HepG2 (cell line): ENCODE measurements at regions of chr18 and their contacts with region 1.

Region 1: GRCh38 chr18:3593904-3594661 is 144.1 kb downstream of the TGIF1 start:
- DNase-seq: peak; percentile 96
- ATAC-seq: peak; percentile 80
- H3K4me3 ChIP-seq: peak overlapping the region; percentile 73 to 94 (median 78)
- H3K27ac ChIP-seq: peak overlapping the region; percentile 96
- H3K4me1 ChIP-seq: peaks cover 75% of the 10 kb centered on the region
- H3K27me3 ChIP-seq: no peaks in the 10 kb centered on the region; a peak in 1 of 5 replicates
- CTCF ChIP-seq: peak; percentile 80
- EP300 ChIP-seq: peak in 1 of 2 experiments; percentile 54; a peak in 1 of 4 replicates
- POLR2A ChIP-seq: peak; percentile 59 to 64
- RAD21 ChIP-seq: 0 out of 2 replicates have a peak, but pooled peaks have one; percentile 9

Region 2: GRCh38 chr18:3261371-3262246 is 332.5 kb before region 1 on chr18 and contains the start of gene MYL12B:
- CTCF ChIA-PET with region 1: no interaction called
- POLR2A ChIA-PET with region 1: interaction called, 12 read pairs
- in situ Hi-C with region 1: no loop called
- intact Hi-C with region 1: no loop called
- DNase-seq: peak; percentile 72
- ATAC-seq: peak; percentile 92
- H3K4me3 ChIP-seq: peak within 1 kb of the TSS; percentile 90 to 96 (median 94)
- H3K27ac ChIP-seq: peak within 1 kb of the TSS; percentile 96
- H3K4me1 ChIP-seq: peaks cover 64% of the 10 kb centered on the region
- H3K27me3 ChIP-seq: no peaks in the 10 kb centered on the region; a peak in 2 of 5 replicates
- CTCF ChIP-seq: no peak
- EP300 ChIP-seq: peak in 1 of 2 experiments; percentile 50; a peak in 1 of 4 replicates
- POLR2A ChIP-seq: peak; percentile 70 to 75
- RAD21 ChIP-seq: peak; percentile 60; the same call in 1 of the 2 replicates
- total RNA-seq, gene MYL12B: 340 and 475 TPM in 2 replicates

Region 3: GRCh38 chr18:3297025-3297984 is 296.8 kb before region 1 on chr18:
- CTCF ChIA-PET with region 1: no interaction called
- POLR2A ChIA-PET with region 1: interaction called, 16 read pairs
- in situ Hi-C with region 1: no loop called
- intact Hi-C with region 1: no loop called
- DNase-seq: peak; percentile 91
- ATAC-seq: peak; percentile 97
- H3K4me3 ChIP-seq: peak overlapping the region; percentile 77 to 91 (median 80)
- H3K27ac ChIP-seq: peak overlapping the region; percentile 58
- H3K4me1 ChIP-seq: peaks cover 11% of the 10 kb centered on the region; the same call in 1 of the 2 replicates
- H3K27me3 ChIP-seq: no peaks in the 10 kb centered on the region; a peak in 1 of 5 replicates
- CTCF ChIP-seq: peak; percentile 97
- EP300 ChIP-seq: peak in 1 of 2 experiments; percentile 52; a peak in 2 of 4 replicates
- POLR2A ChIP-seq: peak; percentile 76 to 89
- RAD21 ChIP-seq: peak; percentile 25

Region 4: DNA sequence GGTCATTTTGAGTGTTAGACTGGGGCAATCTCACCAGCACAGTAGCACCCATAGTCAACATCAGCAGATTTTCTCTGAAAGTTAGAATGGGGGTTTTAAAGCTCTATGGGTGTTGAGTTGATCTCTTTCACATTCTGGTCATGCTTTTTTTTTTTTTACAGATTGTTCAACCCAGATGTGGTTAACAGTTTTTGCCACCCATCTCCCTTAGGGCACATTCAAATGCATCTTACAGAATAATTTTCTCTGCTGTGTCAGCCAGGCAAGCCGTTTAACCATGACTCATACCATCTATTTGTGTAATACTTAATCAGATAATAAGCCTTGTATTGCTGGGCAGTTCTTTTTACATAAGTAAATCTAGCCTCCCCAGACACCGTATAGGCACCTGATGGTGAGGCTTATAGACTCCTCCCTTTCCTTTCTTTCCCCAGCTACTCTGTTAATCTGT is 82.1 kb before region 1 on chr18:
- CTCF ChIA-PET with region 1: no interaction called
- POLR2A ChIA-PET with region 1: no interaction called
- in situ Hi-C with region 1: no loop called
- intact Hi-C with region 1: no loop called
- DNase-seq: no peak
- ATAC-seq: no peak
- H3K4me3 ChIP-seq: no peak overlapping the region
- H3K27ac ChIP-seq: no peak overlapping the region
- H3K4me1 ChIP-seq: no peaks in the 10 kb centered on the region
- H3K27me3 ChIP-seq: peaks cover 1 to 19% of the 10 kb centered on the region in 2 experiments; a peak in 1 of 5 replicates
- CTCF ChIP-seq: no peak
- EP300 ChIP-seq: no peak
- POLR2A ChIP-seq: no peak
- RAD21 ChIP-seq: no peak

Region 5: GRCh38 chr18:3604498-3605408 is 10.7 kb after region 1 on chr18:
- CTCF ChIA-PET with region 1: interaction called, 3 read pairs
- POLR2A ChIA-PET with region 1: interaction called, 55 read pairs
- in situ Hi-C with region 1: no loop called
- intact Hi-C with region 1: loop called (anchors 1 kb)
- DNase-seq: peak; percentile 93
- ATAC-seq: peak; percentile 78
- H3K4me3 ChIP-seq: peak overlapping the region; percentile 42 to 45 (median 45); a peak in 5 of 6 replicates
- H3K27ac ChIP-seq: peak overlapping the region; percentile 93
- H3K4me1 ChIP-seq: peaks cover 75% of the 10 kb centered on the region
- H3K27me3 ChIP-seq: no peaks in the 10 kb centered on the region
- CTCF ChIP-seq: no peak
- EP300 ChIP-seq: peak in 1 of 2 experiments; percentile 77; a peak in 1 of 4 replicates
- POLR2A ChIP-seq: peak in 1 of 2 experiments; percentile 35; a peak in 1 of 4 replicates
- RAD21 ChIP-seq: no peak

Region 6: GRCh38 chr18:3623769-3624545 is 29.9 kb after region 1 on chr18:
- CTCF ChIA-PET with region 1: no interaction called
- POLR2A ChIA-PET with region 1: interaction called, 107 read pairs
- in situ Hi-C with region 1: no loop called
- intact Hi-C with region 1: loop called (anchors 1 kb)
- DNase-seq: peak; percentile 98
- ATAC-seq: peak; percentile 96
- H3K4me3 ChIP-seq: peak overlapping the region; percentile 37 to 64 (median 52)
- H3K27ac ChIP-seq: peak overlapping the region; percentile 94
- H3K4me1 ChIP-seq: peaks cover 81% of the 10 kb centered on the region
- H3K27me3 ChIP-seq: peaks cover 0 to 1% of the 10 kb centered on the region in 2 experiments; a peak in 1 of 5 replicates
- CTCF ChIP-seq: peak; percentile 19; the same call in 1 of the 2 replicates
- EP300 ChIP-seq: peak; percentile 23 to 72
- POLR2A ChIP-seq: peak; percentile 93 to 94
- RAD21 ChIP-seq: peak; percentile 61